Mammary epithelial cell (primary cell): ENCODE measurements at regions of chr4 and their contacts with region 1.

Region 1: DNA sequence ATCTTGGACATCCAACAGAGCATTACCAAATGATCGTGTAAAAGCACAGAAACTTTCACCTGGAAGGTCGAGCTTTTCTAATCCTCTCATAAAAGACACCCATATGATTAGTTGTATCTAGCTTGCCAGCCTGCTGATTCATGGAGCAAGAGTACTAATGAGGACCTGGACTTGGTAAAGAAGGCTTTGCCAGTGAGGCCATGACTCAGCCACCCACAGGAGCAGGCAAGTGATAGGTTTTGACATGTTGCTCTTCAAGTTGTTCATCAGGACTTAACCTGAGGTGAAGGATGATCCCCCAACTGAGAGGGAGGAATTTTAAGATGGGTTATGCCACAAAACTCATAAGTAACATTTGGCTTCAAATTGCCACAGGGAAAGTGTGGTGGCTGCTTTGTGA is 24.7 kb upstream of the EPGN start:
- DNase-seq: peak; percentile 97
- H3K4me3 ChIP-seq: peak overlapping the region in 2 of 3 experiments; percentile 28 to 30
- H3K27ac ChIP-seq: peak overlapping the region; percentile 81
- H3K4me1 ChIP-seq: peaks cover 24% of the 10 kb centered on the region
- H3K27me3 ChIP-seq: no peaks in the 10 kb centered on the region
- CTCF ChIP-seq: no peak

Region 2: GRCh38 chr4:73762409-73762808 is 521.2 kb before region 1 on chr4:
- CTCF ChIA-PET with region 1: no interaction called
- dilution Hi-C with region 1: no loop called
- in situ Hi-C with region 1: no loop called
- intact Hi-C with region 1: no loop called
- DNase-seq: no peak
- H3K4me3 ChIP-seq: no peak overlapping the region
- H3K27ac ChIP-seq: no peak overlapping the region
- H3K4me1 ChIP-seq: peaks cover 6% of the 10 kb centered on the region
- H3K27me3 ChIP-seq: no peaks in the 10 kb centered on the region
- CTCF ChIP-seq: no peak

Region 3: GRCh38 chr4:73952352-73952751 is 331.3 kb before region 1 on chr4:
- CTCF ChIA-PET with region 1: no interaction called
- dilution Hi-C with region 1: no loop called
- in situ Hi-C with region 1: no loop called
- intact Hi-C with region 1: no loop called
- DNase-seq: no peak
- H3K4me3 ChIP-seq: no peak overlapping the region
- H3K27ac ChIP-seq: no peak overlapping the region
- H3K4me1 ChIP-seq: no peaks in the 10 kb centered on the region
- H3K27me3 ChIP-seq: no peaks in the 10 kb centered on the region
- CTCF ChIP-seq: no peak

Region 4: GRCh38 chr4:74267998-74268606 is 15.5 kb before region 1 on chr4:
- CTCF ChIA-PET with region 1: no interaction called
- dilution Hi-C with region 1: no loop called
- in situ Hi-C with region 1: no loop called
- intact Hi-C with region 1: loop called (anchors 1 kb)
- DNase-seq: peak; percentile 83
- H3K4me3 ChIP-seq: no peak overlapping the region
- H3K27ac ChIP-seq: peak overlapping the region; percentile 68
- H3K4me1 ChIP-seq: peaks cover 22% of the 10 kb centered on the region
- H3K27me3 ChIP-seq: no peaks in the 10 kb centered on the region
- CTCF ChIP-seq: no peak